CD4-positive, alpha-beta T cell (primary cell): ENCODE measurements at regions of chr9 and their contacts with region 1.

Region 1: GRCh38 chr9:4792572-4793458 is at the start of gene RCL1:
- DNase-seq: peak; percentile 89 to 98 (median 94)
- ATAC-seq: peak; percentile 89
- H3K4me3 ChIP-seq: peak within 1 kb of the TSS; percentile 87
- H3K4me3 Mint-ChIP-seq: peak within 1 kb of the TSS; percentile 97
- H3K27ac ChIP-seq: peak within 1 kb of the TSS; percentile 83 to 87
- H3K27ac Mint-ChIP-seq: peak within 1 kb of the TSS; percentile 92
- H3K4me1 ChIP-seq: peaks cover 25% of the 10 kb centered on the region
- H3K4me1 Mint-ChIP-seq: peaks cover 45% of the 10 kb centered on the region
- H3K27me3 ChIP-seq: no peaks in the 10 kb centered on the region
- H3K27me3 Mint-ChIP-seq: no peaks in the 10 kb centered on the region
- CTCF ChIP-seq: no peak
- total RNA-seq, gene RCL1: 33.8 to 35.5 TPM

Region 2: DNA sequence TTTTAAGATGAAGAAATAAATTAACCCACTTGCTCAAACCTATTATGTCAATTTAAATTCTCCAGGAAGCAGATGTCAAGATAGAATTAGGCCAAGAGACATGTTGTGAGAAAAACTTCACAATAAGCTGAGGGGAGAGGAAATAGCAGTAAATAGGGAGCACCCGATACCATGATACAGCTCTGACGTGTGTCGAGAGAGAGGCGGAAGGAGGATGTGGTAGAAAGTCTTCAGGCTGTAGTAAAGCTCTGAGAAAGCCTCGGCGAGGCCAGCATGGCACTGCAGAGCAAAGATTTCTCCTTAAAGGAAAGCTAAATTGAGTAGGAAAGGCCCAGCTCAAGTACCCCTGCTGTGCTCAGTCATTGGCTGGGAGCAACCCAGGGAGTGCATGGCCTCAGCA is 1942.9 kb before region 1 on chr9:
- CTCF ChIA-PET with region 1: no interaction called
- POLR2A ChIA-PET with region 1: no interaction called
- intact Hi-C with region 1: loop called in 1 of 2 experiments (anchors 10 kb)
- DNase-seq: peak in 4 of 14 experiments; percentile 4 to 54 (median 28)
- ATAC-seq: peak; percentile 92
- H3K4me3 ChIP-seq: no peak overlapping the region
- H3K4me3 Mint-ChIP-seq: no peak overlapping the region
- H3K27ac ChIP-seq: no peak overlapping the region
- H3K27ac Mint-ChIP-seq: peak overlapping the region; percentile 8
- H3K4me1 ChIP-seq: peaks cover 7% of the 10 kb centered on the region
- H3K4me1 Mint-ChIP-seq: peaks cover 12% of the 10 kb centered on the region
- H3K27me3 ChIP-seq: no peaks in the 10 kb centered on the region
- H3K27me3 Mint-ChIP-seq: peaks cover 23% of the 10 kb centered on the region
- CTCF ChIP-seq: no peak

Region 3: DNA sequence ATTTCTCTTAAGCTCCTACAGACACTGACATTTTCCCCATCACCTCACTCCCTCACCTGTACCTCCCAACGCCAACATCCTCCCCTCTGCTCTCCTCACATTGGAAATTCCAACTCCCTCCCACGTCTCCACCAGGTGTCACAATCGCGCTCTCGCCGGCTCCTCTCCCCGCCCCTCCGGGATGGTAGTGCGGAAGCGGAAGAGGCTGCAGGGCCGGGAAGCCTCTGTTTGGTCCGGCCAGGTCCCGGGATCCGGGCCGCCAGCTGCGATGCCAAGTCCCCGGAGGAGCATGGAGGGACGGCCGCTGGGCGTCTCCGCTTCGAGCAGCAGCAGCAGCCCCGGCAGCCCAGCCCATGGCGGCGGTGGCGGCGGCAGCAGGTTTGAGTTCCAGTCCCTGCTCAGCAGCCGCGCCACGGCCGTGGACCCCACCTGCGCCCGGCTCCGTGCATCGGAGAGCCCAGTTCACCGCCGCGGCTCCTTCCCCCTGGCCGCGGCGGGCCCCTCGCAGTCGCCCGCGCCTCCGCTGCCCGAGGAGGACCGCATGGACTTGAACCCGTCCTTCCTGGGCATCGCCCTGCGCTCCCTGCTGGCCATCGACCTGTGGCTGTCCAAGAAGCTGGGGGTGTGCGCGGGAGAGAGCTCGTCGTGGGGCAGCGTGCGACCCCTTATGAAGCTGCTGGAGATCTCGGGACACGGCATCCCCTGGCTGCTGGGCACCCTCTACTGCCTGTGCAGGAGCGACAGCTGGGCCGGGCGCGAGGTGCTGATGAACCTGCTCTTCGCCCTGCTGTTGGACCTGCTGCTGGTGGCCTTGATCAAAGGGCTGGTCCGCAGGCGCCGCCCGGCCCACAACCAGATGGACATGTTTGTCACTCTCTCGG is 130.5 kb before region 1 on chr9 and contains the start of gene PLPP6:
- CTCF ChIA-PET with region 1: no interaction called
- POLR2A ChIA-PET with region 1: interaction called, 10 read pairs
- intact Hi-C with region 1: loop called (anchors 2 to 5 kb)
- DNase-seq: peak; percentile 48 to 91 (median 69)
- ATAC-seq: peak; percentile 75
- H3K4me3 ChIP-seq: peak within 1 kb of the TSS; percentile 81
- H3K4me3 Mint-ChIP-seq: peak within 1 kb of the TSS; percentile 97
- H3K27ac ChIP-seq: peak within 1 kb of the TSS; percentile 70 to 72
- H3K27ac Mint-ChIP-seq: peak within 1 kb of the TSS; percentile 88
- H3K4me1 ChIP-seq: peaks cover 45% of the 10 kb centered on the region
- H3K4me1 Mint-ChIP-seq: peaks cover 58% of the 10 kb centered on the region
- H3K27me3 ChIP-seq: no peaks in the 10 kb centered on the region
- H3K27me3 Mint-ChIP-seq: no peaks in the 10 kb centered on the region
- CTCF ChIP-seq: peak; percentile 66
- total RNA-seq, gene PLPP6: 8.9 to 10.5 TPM